GM23248 (cell line): ENCODE measurements at regions of chr9 and their contacts with region 1.

Region 1: GRCh38 chr9:98998441-98999151 is 54.9 kb downstream of the COL15A1 start:
- DNase-seq: peak; percentile 92
- H3K4me3 ChIP-seq: peak overlapping the region; percentile 44
- H3K27ac ChIP-seq: peak overlapping the region; percentile 72
- H3K4me1 ChIP-seq: peaks cover 41% of the 10 kb centered on the region
- H3K27me3 ChIP-seq: no peaks in the 10 kb centered on the region

Region 2: GRCh38 chr9:98856982-98857381 is 141.6 kb before region 1 on chr9:
- in situ Hi-C with region 1: loop called (anchors 5 kb)
- DNase-seq: no peak
- H3K4me3 ChIP-seq: no peak overlapping the region
- H3K27ac ChIP-seq: no peak overlapping the region
- H3K4me1 ChIP-seq: peaks cover 27% of the 10 kb centered on the region
- H3K27me3 ChIP-seq: no peaks in the 10 kb centered on the region

Region 3: DNA sequence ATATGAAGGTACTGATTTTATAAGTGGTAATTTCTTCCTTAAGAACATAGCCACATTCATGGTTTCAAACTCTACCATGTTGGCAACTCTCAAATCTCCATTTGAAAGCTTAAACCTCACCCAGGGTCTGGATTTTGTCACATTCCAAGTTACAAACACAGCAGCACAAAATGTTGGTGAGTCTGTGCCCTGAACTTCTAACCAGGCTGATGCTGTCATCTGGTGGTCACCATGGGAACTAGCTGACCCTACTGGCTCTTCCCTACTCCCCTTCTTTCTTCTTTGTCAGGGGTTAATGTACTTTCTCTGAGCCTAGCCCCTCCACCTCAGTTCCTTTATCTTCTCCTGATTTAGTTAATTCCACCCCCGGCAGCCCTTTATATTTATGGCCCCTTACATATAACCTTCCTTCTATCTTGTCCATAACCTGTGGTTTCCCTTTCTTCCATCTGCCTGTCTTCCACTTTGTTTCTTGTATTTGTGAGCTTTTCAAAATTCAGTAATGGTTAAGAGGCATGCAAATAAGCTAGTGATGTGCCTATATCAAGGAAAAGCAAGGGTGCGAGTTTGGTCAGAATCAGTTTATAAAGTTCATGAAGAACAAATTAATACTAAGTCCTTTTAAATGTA is 142.2 kb after region 1 on chr9:
- in situ Hi-C with region 1: loop called (anchors 25 kb)
- DNase-seq: peak; percentile 71
- H3K4me3 ChIP-seq: no peak overlapping the region
- H3K27ac ChIP-seq: no peak overlapping the region
- H3K4me1 ChIP-seq: peaks cover 12% of the 10 kb centered on the region
- H3K27me3 ChIP-seq: no peaks in the 10 kb centered on the region